Psoas muscle (tissue), 8 donors: ENCODE measurements at regions of chr15 and their contacts with region 1.

Region 1: GRCh38 chr15:76866716-76867321 is 38.3 kb downstream of the SCAPER start:
- DNase-seq: no peak
- ATAC-seq: peak; percentile 50 to 86 (median 72)
- H3K4me3 ChIP-seq: no peak overlapping the region
- H3K27ac ChIP-seq: no peak overlapping the region
- H3K4me1 ChIP-seq: peaks cover 25% of the 10 kb centered on the region
- H3K27me3 ChIP-seq: no peaks in the 10 kb centered on the region
- CTCF ChIP-seq: peak; percentile 51

Region 2: DNA sequence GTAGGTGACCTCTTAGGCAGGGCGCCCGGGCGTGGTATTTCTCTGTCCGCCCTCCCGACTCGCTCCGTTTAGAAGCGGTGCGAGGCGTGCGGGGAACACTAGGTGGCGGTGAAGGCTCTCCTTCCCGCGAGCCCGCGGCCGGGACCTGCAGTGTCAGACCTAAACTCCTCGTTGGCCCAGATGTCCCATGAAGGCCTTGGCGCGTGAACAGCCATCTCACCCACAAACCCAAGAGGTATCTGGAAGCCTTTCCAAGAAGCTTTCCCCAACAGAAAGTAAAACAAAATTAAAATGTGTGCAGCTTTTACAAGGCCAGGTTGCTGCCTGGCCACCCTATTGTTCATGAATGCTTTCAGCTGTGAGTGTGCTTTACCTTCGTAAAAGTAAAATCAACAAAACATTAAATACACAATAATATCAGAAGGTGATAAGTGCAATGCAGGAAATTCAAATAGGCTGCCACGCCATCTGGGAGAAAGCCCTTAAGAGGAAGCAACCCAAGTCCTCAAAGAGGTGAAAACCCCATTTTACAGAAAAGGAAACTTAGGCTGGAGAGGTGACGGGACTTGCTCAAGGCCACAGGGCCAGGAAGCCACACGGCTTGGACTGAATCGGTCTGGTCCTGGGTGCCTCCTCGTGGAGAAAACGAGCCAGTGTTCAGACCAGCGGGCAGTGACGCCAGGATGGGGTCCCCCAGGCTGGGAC is 675.8 kb before region 1 on chr15:
- intact Hi-C with region 1: loop called in 1 of 2 experiments (anchors 10 kb)
- DNase-seq: peak; percentile 84 to 91
- ATAC-seq: peak; percentile 86 to 89 (median 88)
- H3K4me3 ChIP-seq: no peak overlapping the region
- H3K27ac ChIP-seq: no peak overlapping the region
- H3K4me1 ChIP-seq: peaks cover 42% of the 10 kb centered on the region
- H3K27me3 ChIP-seq: no peaks in the 10 kb centered on the region
- CTCF ChIP-seq: peak; percentile 79

Region 3: GRCh38 chr15:76636059-76636458 is 230.8 kb before region 1 on chr15:
- intact Hi-C with region 1: loop called in 1 of 2 experiments (anchors 10 kb)
- DNase-seq: no peak
- ATAC-seq: no peak
- H3K4me3 ChIP-seq: no peak overlapping the region
- H3K27ac ChIP-seq: no peak overlapping the region
- H3K4me1 ChIP-seq: peaks cover 5% of the 10 kb centered on the region
- H3K27me3 ChIP-seq: no peaks in the 10 kb centered on the region
- CTCF ChIP-seq: no peak

Region 4: GRCh38 chr15:76776480-76776879 is 90.3 kb before region 1 on chr15:
- intact Hi-C with region 1: no loop called
- DNase-seq: no peak
- ATAC-seq: no peak
- H3K4me3 ChIP-seq: no peak overlapping the region
- H3K27ac ChIP-seq: no peak overlapping the region
- H3K4me1 ChIP-seq: no peaks in the 10 kb centered on the region
- H3K27me3 ChIP-seq: no peaks in the 10 kb centered on the region
- CTCF ChIP-seq: no peak

Region 5: DNA sequence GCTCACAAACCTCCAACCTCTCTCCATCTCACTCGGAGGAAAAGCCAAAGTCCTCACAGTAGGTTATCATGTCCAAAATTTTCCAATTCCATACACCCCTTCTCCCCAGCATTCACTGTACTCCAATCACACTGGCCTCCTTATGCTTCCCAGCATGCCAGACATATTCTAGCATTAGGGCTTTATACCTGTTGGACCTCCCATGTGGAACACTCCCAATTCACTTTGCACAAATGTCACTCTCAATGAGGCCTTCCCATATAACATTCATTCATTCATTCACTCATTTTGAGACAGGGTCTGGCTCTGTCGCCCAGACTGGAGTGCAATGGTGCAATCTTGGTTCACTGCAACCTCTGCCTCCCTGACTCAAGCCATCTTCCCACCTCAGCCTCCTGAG is 18.4 kb after region 1 on chr15:
- intact Hi-C with region 1: no loop called
- DNase-seq: no peak
- ATAC-seq: no peak
- H3K4me3 ChIP-seq: no peak overlapping the region
- H3K27ac ChIP-seq: no peak overlapping the region
- H3K4me1 ChIP-seq: no peaks in the 10 kb centered on the region
- H3K27me3 ChIP-seq: no peaks in the 10 kb centered on the region
- CTCF ChIP-seq: no peak